Dendritic cell treated with granulocyte-macrophage colony-stimulating factor and Interleukin-4, amounts not matched to agents 40 ng/mL and 50 ng/mL, for 4 days (primary cell): ENCODE measurements at regions of chr17 and their contacts with region 1.

Region 1: GRCh38 chr17:61837175-61838051 is 25.9 kb downstream of the BRIP1 start:
- H3K4me3 Mint-ChIP-seq: no peak overlapping the region
- H3K27ac Mint-ChIP-seq: no peak overlapping the region
- H3K4me1 Mint-ChIP-seq: no peaks in the 10 kb centered on the region
- H3K27me3 Mint-ChIP-seq: no peaks in the 10 kb centered on the region

Region 2: GRCh38 chr17:61635913-61636432 is 201.4 kb before region 1 on chr17:
- intact Hi-C with region 1: loop called (anchors 1 kb)
- H3K4me3 Mint-ChIP-seq: no peak overlapping the region
- H3K27ac Mint-ChIP-seq: no peak overlapping the region
- H3K4me1 Mint-ChIP-seq: no peaks in the 10 kb centered on the region
- H3K27me3 Mint-ChIP-seq: peaks cover 10% of the 10 kb centered on the region

Region 3: DNA sequence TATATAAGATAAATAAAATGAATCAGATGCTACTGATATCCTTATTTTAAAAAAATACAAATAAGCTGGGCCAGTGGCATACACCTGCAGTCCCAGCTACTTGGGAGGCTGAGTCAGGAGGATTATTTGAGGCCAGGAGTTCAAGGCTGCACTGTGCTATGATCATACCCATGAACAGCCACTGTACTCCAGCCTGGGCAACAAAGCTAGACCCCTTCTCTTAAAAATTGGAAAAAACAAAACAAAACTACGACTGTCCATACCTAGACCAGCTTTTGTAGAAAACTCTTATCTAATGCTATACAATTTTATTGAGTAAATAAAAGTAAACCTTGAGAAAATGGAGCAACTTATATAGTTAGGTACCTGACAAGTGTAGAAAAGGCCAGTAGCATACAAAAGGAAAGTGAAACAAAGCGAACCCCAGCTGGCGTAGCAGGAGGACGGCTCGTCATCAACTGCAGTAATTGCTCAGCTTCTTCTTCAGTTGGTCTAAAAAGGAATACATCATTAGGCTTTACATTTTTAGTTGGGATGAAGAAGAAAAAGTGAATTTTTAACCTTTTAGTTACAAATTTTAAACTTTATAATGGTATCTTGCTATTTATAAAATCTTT is 66.8 kb after region 1 on chr17:
- intact Hi-C with region 1: no loop called
- H3K4me3 Mint-ChIP-seq: no peak overlapping the region
- H3K27ac Mint-ChIP-seq: no peak overlapping the region
- H3K4me1 Mint-ChIP-seq: no peaks in the 10 kb centered on the region
- H3K27me3 Mint-ChIP-seq: no peaks in the 10 kb centered on the region

Region 4: DNA sequence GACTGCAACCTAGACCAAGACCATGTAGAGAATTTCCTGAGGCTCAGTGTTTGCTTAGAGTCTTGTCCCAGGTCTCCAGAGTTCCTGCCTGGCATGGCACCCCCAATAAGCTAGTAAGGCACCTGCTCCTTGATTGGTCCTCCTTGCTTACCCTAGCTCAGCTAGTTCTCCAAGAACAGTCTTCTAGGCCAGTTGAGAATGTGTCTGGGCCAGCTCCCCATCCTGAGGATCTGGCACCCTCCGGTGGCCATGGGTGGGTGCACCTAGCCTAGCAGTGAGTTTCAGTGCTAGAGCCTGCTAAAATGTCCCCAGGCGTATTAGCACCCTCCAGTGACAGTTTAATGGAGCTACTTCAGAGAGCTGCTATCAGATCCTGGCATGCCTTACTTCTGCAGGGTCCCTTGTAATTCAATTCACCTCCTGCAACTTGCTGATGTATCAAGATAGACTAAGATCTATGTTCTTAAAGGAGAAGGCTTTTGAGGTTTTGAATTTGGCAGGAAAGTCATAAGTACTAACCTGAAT is 272.0 kb after region 1 on chr17:
- intact Hi-C with region 1: loop called (anchors 2 kb)
- H3K4me3 Mint-ChIP-seq: no peak overlapping the region
- H3K27ac Mint-ChIP-seq: no peak overlapping the region
- H3K4me1 Mint-ChIP-seq: peaks cover 10% of the 10 kb centered on the region
- H3K27me3 Mint-ChIP-seq: peaks cover 3% of the 10 kb centered on the region